Activated CD4-positive, alpha-beta memory T cell treated with anti-CD3 and anti-CD28 coated beads, Interleukin-2, amount 10 ng/mL, durations not matched to agents 7 days and 5 days (primary cell): ENCODE measurements at regions of chr17 and their contacts with region 1.

Region 1: DNA sequence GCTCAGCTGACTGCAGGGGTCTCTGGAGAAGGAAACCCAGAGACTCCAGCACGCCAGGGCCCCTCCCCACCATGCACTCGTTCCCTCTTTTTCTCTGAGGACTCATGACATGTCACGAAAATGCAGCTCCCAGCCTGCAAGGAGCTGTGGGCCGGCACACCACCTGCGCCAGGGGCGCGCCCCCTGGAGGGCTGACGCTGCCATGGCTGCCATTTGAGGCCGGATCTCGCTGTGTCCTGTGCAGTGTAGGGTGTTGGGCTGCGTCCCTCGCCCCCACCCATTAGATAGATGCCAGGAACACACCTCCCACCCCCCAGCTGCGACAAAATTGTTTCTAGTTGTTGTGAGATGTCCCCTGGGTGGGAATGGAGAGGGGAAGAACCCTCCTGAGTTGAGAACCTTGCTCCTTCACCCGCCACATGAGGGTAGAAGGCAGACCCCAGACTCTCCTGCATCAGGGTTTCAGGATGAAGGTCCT is 8.2 kb downstream of the SYNGR2 start:
- DNase-seq: peak; percentile 82
- H3K4me3 Mint-ChIP-seq: no peak overlapping the region
- H3K27ac Mint-ChIP-seq: peak overlapping the region; percentile 19
- H3K4me1 Mint-ChIP-seq: peaks cover 66% of the 10 kb centered on the region
- H3K27me3 Mint-ChIP-seq: no peaks in the 10 kb centered on the region

Region 2: DNA sequence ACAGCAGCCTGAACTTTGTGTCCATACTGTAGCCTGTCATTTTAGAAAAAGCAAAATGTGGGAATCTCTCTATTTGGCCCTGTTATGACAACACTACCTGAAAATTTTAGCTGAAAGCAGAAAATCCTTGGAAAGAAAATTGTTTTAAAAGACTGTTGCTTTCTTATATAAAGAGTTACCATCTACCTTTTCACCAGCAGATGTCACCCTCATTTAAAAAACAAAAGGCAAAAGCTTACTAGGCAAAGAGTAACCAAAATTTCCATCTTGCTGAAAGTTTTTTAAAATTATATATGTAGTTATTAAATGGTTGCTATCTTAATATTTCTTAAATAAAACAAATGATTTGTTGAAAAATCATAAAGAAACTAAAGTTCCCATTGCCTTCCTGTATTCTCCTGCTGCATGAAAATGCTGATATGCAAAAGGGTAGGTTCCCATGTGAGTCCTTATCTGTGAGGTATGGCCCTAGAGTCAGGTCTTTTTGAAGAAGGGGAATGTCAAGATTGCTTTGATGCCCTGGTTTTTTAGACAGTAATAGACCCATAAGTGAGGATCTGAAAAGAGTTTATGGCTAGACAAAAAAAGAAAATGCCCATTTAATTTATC is 157.1 kb before region 1 on chr17:
- CTCF ChIA-PET with region 1: interaction called, 23 read pairs
- POLR2A ChIA-PET with region 1: no interaction called
- DNase-seq: no peak
- H3K4me3 Mint-ChIP-seq: peak overlapping the region; percentile 57
- H3K27ac Mint-ChIP-seq: peak overlapping the region; percentile 83
- H3K4me1 Mint-ChIP-seq: peaks cover 26% of the 10 kb centered on the region
- H3K27me3 Mint-ChIP-seq: no peaks in the 10 kb centered on the region

Region 3: GRCh38 chr17:78112518-78113226 is 63.9 kb before region 1 on chr17:
- CTCF ChIA-PET with region 1: interaction called, 20 read pairs
- POLR2A ChIA-PET with region 1: interaction called, 4 read pairs
- DNase-seq: peak; percentile 81
- H3K4me3 Mint-ChIP-seq: no peak overlapping the region
- H3K27ac Mint-ChIP-seq: peak overlapping the region; percentile 76
- H3K4me1 Mint-ChIP-seq: peaks cover 37% of the 10 kb centered on the region
- H3K27me3 Mint-ChIP-seq: no peaks in the 10 kb centered on the region

Region 4: GRCh38 chr17:78128551-78129350 is 47.8 kb before region 1 on chr17 and contains the start of gene TMC6:
- CTCF ChIA-PET with region 1: interaction called, 11 read pairs
- POLR2A ChIA-PET with region 1: interaction called, 12 read pairs
- DNase-seq: peak; percentile 79
- H3K4me3 Mint-ChIP-seq: peak within 1 kb of the TSS; percentile 88
- H3K27ac Mint-ChIP-seq: peak within 1 kb of the TSS; percentile 100
- H3K4me1 Mint-ChIP-seq: peaks cover 49% of the 10 kb centered on the region
- H3K27me3 Mint-ChIP-seq: no peaks in the 10 kb centered on the region
- total RNA-seq, gene TMC6: 460 to 463 TPM

Region 5: GRCh38 chr17:78133971-78134898 is 42.4 kb before region 1 on chr17:
- CTCF ChIA-PET with region 1: interaction called, 9 read pairs
- POLR2A ChIA-PET with region 1: interaction called, 12 read pairs
- DNase-seq: peak; percentile 88
- H3K4me3 Mint-ChIP-seq: peak overlapping the region; percentile 87
- H3K27ac Mint-ChIP-seq: peak overlapping the region; percentile 89
- H3K4me1 Mint-ChIP-seq: peaks cover 74% of the 10 kb centered on the region
- H3K27me3 Mint-ChIP-seq: no peaks in the 10 kb centered on the region